ENCODE measurements at regions of chr17 and their contacts with region 1.

Region 1: GRCh38 chr17:69314246-69315065 is 12.5 kb downstream of the ABCA5 start:
- DNase-seq: no peak
- ATAC-seq: no peak
- H3K4me3 ChIP-seq: no peak overlapping the region
- H3K27ac ChIP-seq: no peak overlapping the region
- H3K4me1 ChIP-seq: peaks cover 0 to 5% of the 10 kb centered on the region in 2 experiments; a peak in 2 of 4 replicates
- H3K27me3 ChIP-seq: no peaks in the 10 kb centered on the region
- CTCF ChIP-seq: no peak
- POLR2A ChIP-seq: no peak
- RAD21 ChIP-seq: no peak

Region 2: DNA sequence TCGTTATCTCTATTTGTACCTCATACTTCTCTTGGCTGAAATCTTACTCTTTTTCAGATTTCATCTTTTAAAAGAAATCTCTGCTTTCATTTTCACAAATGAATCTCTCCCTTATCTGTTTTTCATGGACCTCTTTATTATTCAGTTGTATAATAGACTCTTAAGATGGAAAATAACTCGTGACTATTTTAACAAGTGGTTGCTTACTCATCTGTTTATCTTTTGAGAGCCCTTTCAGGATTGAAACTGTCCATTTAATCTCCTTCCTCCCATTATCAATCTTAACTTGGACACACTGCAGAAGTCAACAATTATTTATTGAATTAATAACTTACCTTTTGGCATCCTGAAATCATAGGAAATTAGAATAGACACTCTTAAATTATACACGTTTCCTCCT is 428.1 kb before region 1 on chr17:
- CTCF ChIA-PET with region 1: no interaction called
- POLR2A ChIA-PET with region 1: no interaction called
- RAD21 ChIA-PET with region 1: no interaction called
- intact Hi-C with region 1: no loop called
- DNase-seq: no peak
- ATAC-seq: no peak
- H3K4me3 ChIP-seq: no peak overlapping the region
- H3K27ac ChIP-seq: no peak overlapping the region
- H3K4me1 ChIP-seq: no peaks in the 10 kb centered on the region
- H3K27me3 ChIP-seq: no peaks in the 10 kb centered on the region
- CTCF ChIP-seq: no peak
- POLR2A ChIP-seq: no peak
- RAD21 ChIP-seq: no peak

Region 3: DNA sequence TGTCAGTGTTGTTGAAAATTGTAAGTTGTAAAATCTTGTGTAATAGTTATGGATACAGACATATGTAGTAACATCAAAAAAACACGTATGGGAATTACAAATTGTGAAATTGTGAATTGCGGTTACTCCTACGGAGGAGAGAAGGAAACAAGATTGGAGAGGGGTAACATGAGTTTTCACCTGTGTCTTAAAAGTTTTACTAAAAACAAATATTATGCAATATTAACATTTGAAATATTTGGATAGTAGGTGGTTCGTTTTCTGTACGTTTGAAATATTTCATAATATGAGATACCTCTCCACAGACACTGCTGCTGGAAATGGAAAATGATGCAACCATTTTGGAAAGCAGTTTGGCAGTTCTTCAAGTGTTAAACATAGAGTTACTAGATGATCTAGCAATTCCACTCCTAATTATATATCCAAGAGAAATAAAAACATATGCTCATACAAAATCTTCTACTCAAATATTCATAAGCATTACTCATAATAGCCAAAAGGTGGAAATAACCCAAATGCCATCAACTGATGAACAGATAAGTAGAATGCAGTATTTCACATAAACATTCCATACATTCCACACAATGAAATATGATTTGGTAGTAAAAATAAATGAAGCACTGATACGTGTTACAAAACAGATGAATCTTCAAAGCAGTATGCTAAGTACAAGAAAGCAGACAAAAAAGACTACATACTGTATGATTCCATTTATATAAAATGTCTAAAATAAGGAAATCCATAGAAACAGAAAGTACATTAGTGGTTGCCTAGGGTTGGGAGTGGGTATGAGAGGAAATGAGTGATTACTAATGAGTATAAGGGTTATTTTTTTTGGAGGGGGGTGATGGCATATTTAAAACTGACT is 45.1 kb before region 1 on chr17:
- CTCF ChIA-PET with region 1: no interaction called
- POLR2A ChIA-PET with region 1: no interaction called
- RAD21 ChIA-PET with region 1: no interaction called
- intact Hi-C with region 1: loop called (anchors 5 kb)
- DNase-seq: no peak
- ATAC-seq: no peak
- H3K4me3 ChIP-seq: no peak overlapping the region
- H3K27ac ChIP-seq: no peak overlapping the region
- H3K4me1 ChIP-seq: no peaks in the 10 kb centered on the region; a peak in 1 of 4 replicates
- H3K27me3 ChIP-seq: no peaks in the 10 kb centered on the region
- CTCF ChIP-seq: no peak
- POLR2A ChIP-seq: no peak
- RAD21 ChIP-seq: no peak

Region 4: DNA sequence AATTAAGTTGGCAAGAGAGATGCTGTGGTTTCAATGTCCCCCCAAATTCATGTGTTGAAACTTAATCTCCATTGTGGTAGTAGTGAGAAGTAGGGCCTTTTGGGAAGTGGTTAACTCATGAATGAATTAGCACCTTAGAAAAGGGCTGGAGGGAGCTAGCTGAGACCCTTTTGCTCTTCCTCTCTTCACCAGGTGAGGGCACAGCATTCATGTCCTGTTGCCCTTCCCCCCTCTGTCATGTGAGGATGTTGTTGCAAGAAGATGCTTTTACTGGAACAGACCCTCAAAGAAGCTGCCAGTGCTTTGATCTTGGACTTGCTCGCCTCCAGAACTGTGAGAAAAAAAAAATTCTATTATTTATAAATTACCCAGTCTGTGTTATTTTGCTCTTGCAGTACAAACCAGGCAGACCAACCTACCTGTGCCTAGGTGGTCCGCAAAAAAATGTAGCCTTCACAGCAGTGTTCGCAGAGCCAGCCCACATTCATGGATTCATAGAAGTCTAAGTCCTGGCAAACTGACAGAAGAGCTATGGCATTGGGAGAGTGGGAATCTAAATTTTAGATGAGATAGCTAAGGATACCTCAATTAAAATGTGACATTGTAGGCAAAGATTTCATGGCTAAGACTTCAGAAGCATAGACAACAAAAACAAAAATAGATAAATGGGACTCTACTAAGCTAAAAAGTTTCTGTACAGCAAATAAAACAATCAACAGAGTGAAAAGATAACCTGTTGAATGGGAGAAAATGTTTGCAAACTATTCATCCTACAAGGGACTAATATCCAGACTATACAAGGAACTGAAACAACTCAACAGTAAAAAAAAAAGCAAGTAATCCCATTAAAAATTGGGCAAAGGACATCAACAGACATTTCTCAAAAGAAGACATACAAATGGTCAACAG is 44.5 kb after region 1 on chr17:
- CTCF ChIA-PET with region 1: no interaction called
- POLR2A ChIA-PET with region 1: no interaction called
- RAD21 ChIA-PET with region 1: no interaction called
- intact Hi-C with region 1: no loop called
- DNase-seq: peak; percentile 26
- ATAC-seq: peak; percentile 91
- H3K4me3 ChIP-seq: no peak overlapping the region
- H3K27ac ChIP-seq: no peak overlapping the region
- H3K4me1 ChIP-seq: no peaks in the 10 kb centered on the region
- H3K27me3 ChIP-seq: no peaks in the 10 kb centered on the region
- CTCF ChIP-seq: peak; percentile 25 to 56 (median 53); a peak in 4 of 6 replicates
- POLR2A ChIP-seq: no peak
- RAD21 ChIP-seq: peak; percentile 43; the same call in 1 of the 2 replicates

Measured in HCT116 (cell line).